Activated CD4-positive, alpha-beta memory T cell treated with anti-CD3 and anti-CD28 coated beads for 36 hours (primary cell): ENCODE measurements at regions of chr3 and their contacts with region 1.

Region 1: GRCh38 chr3:169772897-169773828 is at the start of gene MYNN:
- DNase-seq: peak; percentile 95
- H3K4me3 Mint-ChIP-seq: peak within 1 kb of the TSS; percentile 96
- H3K27ac Mint-ChIP-seq: peak within 1 kb of the TSS; percentile 97
- H3K4me1 Mint-ChIP-seq: peaks cover 39% of the 10 kb centered on the region
- H3K27me3 Mint-ChIP-seq: no peaks in the 10 kb centered on the region
- total RNA-seq, gene MYNN: 12.8 to 14.0 TPM

Region 2: DNA sequence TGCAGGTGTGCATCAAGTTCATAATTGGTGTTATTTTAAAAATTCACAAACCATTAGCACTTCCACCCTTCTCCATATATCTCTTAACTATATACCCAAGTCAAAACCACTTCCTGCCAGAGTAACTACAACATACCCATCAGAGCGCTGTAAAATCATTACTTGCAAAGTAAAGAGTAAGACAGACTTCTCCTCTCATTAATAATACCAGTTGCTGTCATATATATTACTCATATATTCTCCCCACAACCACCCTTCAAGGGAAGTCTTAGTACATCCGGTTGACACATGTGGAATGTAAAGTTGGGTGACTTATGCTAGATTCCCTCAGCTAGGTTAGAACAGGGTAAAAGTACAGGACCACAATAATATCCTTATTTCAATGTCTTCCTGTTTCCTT is 13.9 kb before region 1 on chr3:
- CTCF ChIA-PET with region 1: interaction called, 22 read pairs
- POLR2A ChIA-PET with region 1: interaction called, 34 read pairs
- intact Hi-C with region 1: loop called (anchors 2 kb)
- DNase-seq: no peak
- H3K4me3 Mint-ChIP-seq: peak overlapping the region; percentile 12
- H3K27ac Mint-ChIP-seq: peak overlapping the region; percentile 76
- H3K4me1 Mint-ChIP-seq: peaks cover 30% of the 10 kb centered on the region
- H3K27me3 Mint-ChIP-seq: no peaks in the 10 kb centered on the region

Region 3: DNA sequence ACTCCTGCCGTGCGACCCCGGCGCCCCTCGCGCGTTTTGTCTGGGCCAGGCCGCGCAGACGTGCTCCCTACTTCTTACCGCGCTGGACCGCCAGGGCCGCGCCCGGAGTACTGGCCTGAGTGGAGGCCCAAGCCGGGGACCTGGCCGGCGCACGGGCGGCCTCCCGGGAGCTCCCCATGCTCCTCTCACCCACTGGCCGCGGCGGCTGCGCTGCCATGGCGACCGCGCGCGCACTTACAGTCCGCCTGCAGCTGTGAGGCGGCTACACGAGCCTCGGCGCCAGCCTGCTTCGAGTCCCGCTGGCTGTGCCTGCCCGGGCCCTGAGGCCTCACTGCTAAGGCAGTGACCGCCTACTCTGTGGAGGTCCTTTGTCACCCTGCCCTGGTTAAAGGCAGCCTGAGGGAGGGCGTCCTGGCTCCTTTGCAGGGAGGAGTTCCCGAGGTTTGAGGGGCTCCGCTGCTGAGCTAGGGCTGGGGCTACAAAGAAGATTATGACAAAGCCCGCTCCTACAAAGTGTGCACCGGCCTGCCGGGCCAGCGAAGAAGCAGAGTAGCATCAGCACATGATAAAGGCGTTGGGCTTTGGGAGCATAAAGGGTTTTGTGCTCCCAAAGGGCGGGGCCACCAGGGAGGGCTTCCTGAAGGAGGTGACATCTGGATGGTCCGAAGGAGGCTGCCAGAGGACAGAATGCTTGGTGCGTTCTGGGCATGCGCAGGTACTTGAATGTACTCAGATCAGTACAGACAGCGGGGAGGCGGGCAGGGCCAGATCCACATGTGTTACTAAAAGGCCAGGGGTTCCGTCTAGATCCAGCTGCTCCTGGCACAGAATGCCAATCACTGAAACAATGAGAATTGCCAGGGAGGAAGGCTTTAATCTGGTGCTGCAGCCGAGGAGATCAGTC is 39.4 kb after region 1 on chr3 and contains the starts of genes LRRC34 and LRRIQ4:
- CTCF ChIA-PET with region 1: no interaction called
- POLR2A ChIA-PET with region 1: interaction called, 4 read pairs
- intact Hi-C with region 1: loop called (anchors 1 kb)
- DNase-seq: peak; percentile 88
- H3K4me3 Mint-ChIP-seq: peak within 1 kb of the TSS; percentile 75
- H3K27ac Mint-ChIP-seq: peak within 1 kb of the TSS; percentile 43
- H3K4me1 Mint-ChIP-seq: peaks cover 19% of the 10 kb centered on the region
- H3K27me3 Mint-ChIP-seq: no peaks in the 10 kb centered on the region
- total RNA-seq, gene LRRC34: 2.8 to 2.9 TPM
- total RNA-seq, gene LRRIQ4: 0.14 TPM in 1 of 2 experiments, not detected in the other

Region 4: GRCh38 chr3:169966428-169966950 is 193.3 kb after region 1 on chr3 and contains the start of gene SEC62:
- CTCF ChIA-PET with region 1: interaction called, 5 read pairs
- POLR2A ChIA-PET with region 1: interaction called, 10 read pairs
- intact Hi-C with region 1: loop called (anchors 2 kb)
- DNase-seq: peak; percentile 97
- H3K4me3 Mint-ChIP-seq: peak within 1 kb of the TSS; percentile 80
- H3K27ac Mint-ChIP-seq: peak within 1 kb of the TSS; percentile 96
- H3K4me1 Mint-ChIP-seq: peaks cover 59% of the 10 kb centered on the region
- H3K27me3 Mint-ChIP-seq: no peaks in the 10 kb centered on the region
- total RNA-seq, gene SEC62: 59.7 to 60.7 TPM

Region 5: DNA sequence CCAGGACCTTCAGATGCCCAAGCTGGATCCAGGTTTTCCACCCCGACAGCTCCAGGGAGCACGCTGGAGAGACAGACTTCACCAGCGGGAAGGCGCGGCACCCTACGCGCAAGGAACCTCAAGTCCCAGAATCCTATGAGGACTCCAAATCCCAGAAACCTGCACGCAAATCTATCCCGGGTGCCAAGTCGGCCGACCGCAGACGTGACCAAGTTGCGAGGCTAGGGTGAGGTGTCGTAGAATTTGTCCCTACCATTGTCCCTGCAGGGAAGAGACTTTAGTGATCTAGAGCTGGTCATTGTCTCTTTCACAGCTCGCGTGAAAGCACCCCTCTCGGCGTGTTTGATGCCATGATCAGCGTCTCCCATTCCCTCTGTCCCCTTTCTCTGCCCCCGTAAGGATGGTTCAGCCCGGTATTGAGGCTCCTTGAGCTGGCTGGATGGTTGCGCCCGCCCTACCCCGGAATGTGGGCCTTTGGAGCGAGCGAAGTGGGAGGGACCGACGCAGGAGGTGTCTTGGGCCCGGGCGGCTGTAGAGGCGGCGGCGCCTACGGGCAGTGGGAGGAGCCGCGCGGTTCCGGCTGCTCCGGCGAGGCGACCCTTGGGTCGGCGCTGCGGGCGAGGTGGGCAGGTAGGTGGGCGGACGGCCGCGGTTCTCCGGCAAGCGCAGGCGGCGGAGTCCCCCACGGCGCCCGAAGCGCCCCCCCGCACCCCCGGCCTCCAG is 448.9 kb after region 1 on chr3 and contains the start of gene PRKCI:
- CTCF ChIA-PET with region 1: no interaction called
- POLR2A ChIA-PET with region 1: no interaction called
- intact Hi-C with region 1: loop called (anchors 2 kb)
- DNase-seq: peak; percentile 95
- H3K4me3 Mint-ChIP-seq: peak within 1 kb of the TSS; percentile 93
- H3K27ac Mint-ChIP-seq: peak within 1 kb of the TSS; percentile 91
- H3K4me1 Mint-ChIP-seq: peaks cover 25% of the 10 kb centered on the region
- H3K27me3 Mint-ChIP-seq: no peaks in the 10 kb centered on the region
- total RNA-seq, gene PRKCI: 27.0 to 27.6 TPM

Region 6: GRCh38 chr3:170869645-170870593 is 1096.8 kb after region 1 on chr3 and contains the start of gene RPL22L1:
- CTCF ChIA-PET with region 1: interaction called, 3 read pairs
- POLR2A ChIA-PET with region 1: no interaction called
- intact Hi-C with region 1: loop called (anchors 2 kb)
- DNase-seq: peak; percentile 95
- H3K4me3 Mint-ChIP-seq: peak within 1 kb of the TSS; percentile 97
- H3K27ac Mint-ChIP-seq: peak within 1 kb of the TSS; percentile 98
- H3K4me1 Mint-ChIP-seq: peaks cover 22% of the 10 kb centered on the region
- H3K27me3 Mint-ChIP-seq: no peaks in the 10 kb centered on the region
- total RNA-seq, gene RPL22L1: 379 to 382 TPM

Region 7: DNA sequence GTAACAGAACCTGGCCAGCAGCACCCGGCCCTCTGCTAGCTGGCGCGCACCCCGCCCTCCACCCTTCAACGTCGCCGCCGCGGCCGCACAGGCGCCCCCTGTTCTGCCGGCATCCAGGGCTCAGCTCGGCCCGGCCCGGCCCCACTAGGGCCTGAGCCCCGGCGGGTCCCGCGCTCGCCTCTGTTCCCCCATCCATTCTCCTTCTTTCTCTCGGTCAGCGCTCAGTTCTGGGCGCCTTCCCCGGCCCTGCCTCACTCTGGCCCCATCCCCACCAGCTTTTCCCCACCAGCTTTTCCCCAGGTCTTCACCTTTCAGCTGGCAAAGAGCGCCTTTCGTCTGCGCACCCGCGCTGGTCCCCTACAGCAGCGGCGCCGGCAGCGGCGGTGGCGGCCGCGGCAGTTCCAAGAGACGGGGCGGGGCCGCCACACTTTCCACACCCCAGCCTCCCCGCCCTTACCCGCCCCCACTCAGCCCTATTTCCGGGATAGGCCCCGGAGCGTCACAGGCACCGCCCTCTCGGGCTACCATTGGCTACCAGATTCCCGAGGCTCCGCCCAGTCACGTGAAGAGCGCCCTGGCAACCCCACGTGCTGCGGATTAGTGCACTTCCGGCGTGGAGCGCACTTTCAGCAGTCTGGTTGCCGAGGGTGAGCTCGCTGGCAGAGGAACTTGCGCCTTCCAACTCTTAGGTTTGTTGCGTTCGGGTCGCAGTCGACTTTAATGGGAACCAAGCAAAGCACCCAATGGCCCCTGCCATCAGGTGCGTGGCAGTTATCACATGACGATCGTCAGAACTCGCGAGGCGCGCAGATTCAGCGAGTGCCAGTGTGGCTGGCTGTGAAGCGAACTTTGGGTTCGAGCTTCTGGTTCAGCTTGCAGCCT is 1135.3 kb after region 1 on chr3 and contains the start of gene EIF5A2:
- CTCF ChIA-PET with region 1: no interaction called
- POLR2A ChIA-PET with region 1: no interaction called
- intact Hi-C with region 1: loop called (anchors 2 kb)
- DNase-seq: peak; percentile 97
- H3K4me3 Mint-ChIP-seq: peak within 1 kb of the TSS; percentile 93
- H3K27ac Mint-ChIP-seq: peak within 1 kb of the TSS; percentile 69
- H3K4me1 Mint-ChIP-seq: peaks cover 20% of the 10 kb centered on the region
- H3K27me3 Mint-ChIP-seq: no peaks in the 10 kb centered on the region
- total RNA-seq, gene EIF5A2: 5.7 to 8.7 TPM